Posterior cingulate gyrus (tissue), 11 donors: ENCODE measurements at regions of chr20 and their contacts with region 1.

Region 1: GRCh38 chr20:62808211-62808865 is 3.7 kb downstream of the OGFR start:
- DNase-seq: peak; percentile 46 to 96 (median 82)

Region 2: GRCh38 chr20:62668441-62669027 is 139.8 kb before region 1 on chr20:
- intact Hi-C with region 1: loop called (anchors 5 kb)
- DNase-seq: peak; percentile 67 to 97 (median 84)

Region 3: DNA sequence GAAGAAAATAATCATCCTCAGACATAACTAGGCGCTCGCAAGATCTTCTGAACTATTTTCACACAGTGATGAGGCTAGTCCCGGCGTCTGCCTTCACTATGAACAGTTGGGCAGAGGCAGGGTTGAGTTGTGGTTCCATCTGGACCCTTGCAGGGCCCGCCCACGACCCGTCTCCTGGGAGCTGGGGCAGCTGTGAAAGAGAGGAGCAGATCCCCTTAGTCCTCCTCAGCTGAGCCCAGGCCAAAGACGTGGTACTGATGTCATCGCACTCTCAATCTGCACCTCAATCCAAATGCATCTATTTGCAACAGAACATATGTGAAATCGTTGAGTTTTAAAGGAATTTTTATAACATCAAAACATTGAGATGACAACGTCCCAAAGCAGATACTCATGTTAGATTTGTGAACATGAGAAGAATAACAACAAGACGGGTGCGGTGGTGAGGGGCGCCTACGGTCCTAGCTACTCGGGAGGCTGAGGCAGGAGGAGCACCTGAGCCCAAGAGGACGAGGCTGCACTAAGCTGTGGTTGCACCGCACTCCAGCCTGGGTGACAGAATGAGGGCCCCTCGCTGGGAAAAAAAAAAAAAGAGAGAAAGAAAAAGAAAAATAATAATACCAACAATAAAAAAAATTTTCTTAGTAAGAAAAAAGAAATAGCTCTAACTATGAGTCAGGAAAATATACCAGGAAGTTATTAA is 38.0 kb after region 1 on chr20:
- intact Hi-C with region 1: loop called (anchors 5 kb)
- DNase-seq: peak in 8 of 10 donors; percentile 50 to 95 (median 72)